ENCODE measurements at regions of chr11 and their contacts with region 1.

Region 1: DNA sequence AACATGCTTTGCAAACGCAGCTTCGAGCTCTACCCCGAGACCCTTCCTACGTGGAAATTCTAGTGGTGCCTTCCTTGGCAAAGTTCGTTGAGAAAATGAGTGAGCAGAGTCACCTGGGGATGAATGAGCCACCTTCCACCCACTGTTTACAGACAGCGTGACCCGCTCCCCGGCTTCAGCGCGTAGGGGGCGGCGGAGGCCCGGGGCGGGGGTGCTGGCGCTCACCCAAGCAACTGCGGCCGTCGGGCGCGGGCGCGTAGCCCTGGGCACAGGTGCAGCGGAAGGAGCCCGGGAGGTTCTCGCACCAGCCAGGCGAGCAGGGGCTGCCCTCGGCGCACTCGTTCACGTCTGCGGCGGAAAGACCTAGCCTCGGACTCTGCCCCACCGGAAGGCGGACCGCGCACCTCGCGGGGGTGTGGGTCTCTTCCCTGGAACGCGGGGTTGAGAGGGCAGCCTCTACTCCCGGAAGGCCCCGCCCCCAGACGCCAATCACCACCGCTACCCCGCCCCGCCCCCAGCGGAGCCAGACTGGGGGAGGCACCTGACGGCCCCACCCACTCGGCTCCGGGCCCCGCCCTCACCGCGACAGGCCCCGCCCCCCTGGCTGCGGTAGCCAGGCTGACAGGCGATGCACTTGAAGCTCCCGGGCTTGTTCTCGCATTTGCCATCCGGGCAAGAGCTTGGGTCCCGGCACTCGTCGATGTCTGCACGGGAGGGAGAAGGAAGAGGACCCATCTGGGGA is 11.8 kb downstream of the LTBP3 start:
- DNase-seq: peak; percentile 96 to 100 (median 98)
- ATAC-seq: peak; percentile 89
- H3K4me3 ChIP-seq: peak overlapping the region; percentile 49 to 50
- H3K4me3 Mint-ChIP-seq: peak overlapping the region; percentile 82
- H3K27ac ChIP-seq: peak overlapping the region; percentile 62 to 74
- H3K27ac Mint-ChIP-seq: peak overlapping the region; percentile 95
- H3K4me1 ChIP-seq: peaks cover 39% of the 10 kb centered on the region
- H3K4me1 Mint-ChIP-seq: peaks cover 48% of the 10 kb centered on the region
- H3K27me3 ChIP-seq: no peaks in the 10 kb centered on the region
- H3K27me3 Mint-ChIP-seq: no peaks in the 10 kb centered on the region
- CTCF ChIP-seq: no peak

Region 2: GRCh38 chr11:65454696-65455456 is 91.5 kb before region 1 on chr11:
- CTCF ChIA-PET with region 1: no interaction called
- POLR2A ChIA-PET with region 1: no interaction called
- intact Hi-C with region 1: no loop called
- DNase-seq: peak; percentile 51 to 89 (median 82)
- ATAC-seq: peak; percentile 86
- H3K4me3 ChIP-seq: peak overlapping the region; percentile 74 to 87
- H3K4me3 Mint-ChIP-seq: peak overlapping the region; percentile 85
- H3K27ac ChIP-seq: peak overlapping the region; percentile 47 to 68
- H3K27ac Mint-ChIP-seq: peak overlapping the region; percentile 85
- H3K4me1 ChIP-seq: peaks cover 12% of the 10 kb centered on the region
- H3K4me1 Mint-ChIP-seq: peaks cover 23% of the 10 kb centered on the region
- H3K27me3 ChIP-seq: peaks cover 0 to under 1% of the 10 kb centered on the region in 2 experiments
- H3K27me3 Mint-ChIP-seq: no peaks in the 10 kb centered on the region
- CTCF ChIP-seq: no peak

Region 3: GRCh38 chr11:65477149-65477965 is 69.0 kb before region 1 on chr11:
- CTCF ChIA-PET with region 1: no interaction called
- POLR2A ChIA-PET with region 1: no interaction called
- intact Hi-C with region 1: no loop called
- DNase-seq: peak; percentile 71 to 94 (median 91)
- ATAC-seq: peak; percentile 78
- H3K4me3 ChIP-seq: peak overlapping the region; percentile 89 to 92
- H3K4me3 Mint-ChIP-seq: peak overlapping the region; percentile 100
- H3K27ac ChIP-seq: peak overlapping the region; percentile 89 to 98
- H3K27ac Mint-ChIP-seq: peak overlapping the region; percentile 100
- H3K4me1 ChIP-seq: peaks cover 12% of the 10 kb centered on the region
- H3K4me1 Mint-ChIP-seq: peaks cover 21% of the 10 kb centered on the region
- H3K27me3 ChIP-seq: no peaks in the 10 kb centered on the region
- H3K27me3 Mint-ChIP-seq: no peaks in the 10 kb centered on the region
- CTCF ChIP-seq: no peak

Region 4: GRCh38 chr11:65524741-65525545 is 21.4 kb before region 1 on chr11 and contains the start of gene SCYL1:
- CTCF ChIA-PET with region 1: interaction called, 27 read pairs
- POLR2A ChIA-PET with region 1: interaction called, 17 read pairs
- intact Hi-C with region 1: loop called (anchors 1 kb)
- DNase-seq: peak; percentile 77 to 92 (median 83)
- ATAC-seq: peak; percentile 93
- H3K4me3 ChIP-seq: peak within 1 kb of the TSS; percentile 73 to 89
- H3K4me3 Mint-ChIP-seq: peak within 1 kb of the TSS; percentile 84
- H3K27ac ChIP-seq: peak within 1 kb of the TSS; percentile 53 to 68
- H3K27ac Mint-ChIP-seq: peak within 1 kb of the TSS; percentile 91
- H3K4me1 ChIP-seq: peaks cover 60% of the 10 kb centered on the region
- H3K4me1 Mint-ChIP-seq: peaks cover 52% of the 10 kb centered on the region
- H3K27me3 ChIP-seq: no peaks in the 10 kb centered on the region
- H3K27me3 Mint-ChIP-seq: no peaks in the 10 kb centered on the region
- CTCF ChIP-seq: no peak
- total RNA-seq, gene SCYL1: 55.8 to 60.4 TPM

Region 5: GRCh38 chr11:65558002-65558931 is 11.9 kb after region 1 on chr11 and contains the start of gene LTBP3:
- CTCF ChIA-PET with region 1: interaction called, 55 read pairs
- POLR2A ChIA-PET with region 1: interaction called, 23 read pairs
- intact Hi-C with region 1: loop called in 1 of 2 experiments (anchors 1 kb)
- DNase-seq: peak in 5 of 9 experiments; percentile 29 to 70 (median 66)
- ATAC-seq: peak; percentile 38
- H3K4me3 ChIP-seq: peak within 1 kb of the TSS; percentile 54 to 61
- H3K4me3 Mint-ChIP-seq: peak within 1 kb of the TSS; percentile 89
- H3K27ac ChIP-seq: peak within 1 kb of the TSS; percentile 60 to 79
- H3K27ac Mint-ChIP-seq: peak within 1 kb of the TSS; percentile 89
- H3K4me1 ChIP-seq: peaks cover 61% of the 10 kb centered on the region
- H3K4me1 Mint-ChIP-seq: peaks cover 56% of the 10 kb centered on the region
- H3K27me3 ChIP-seq: no peaks in the 10 kb centered on the region
- H3K27me3 Mint-ChIP-seq: no peaks in the 10 kb centered on the region
- CTCF ChIP-seq: no peak
- total RNA-seq, gene LTBP3: 231 to 246 TPM

Measured in CD8-positive, alpha-beta T cell (primary cell).